ENCODE measurements at regions of chr16 and their contacts with region 1.

Region 1: DNA sequence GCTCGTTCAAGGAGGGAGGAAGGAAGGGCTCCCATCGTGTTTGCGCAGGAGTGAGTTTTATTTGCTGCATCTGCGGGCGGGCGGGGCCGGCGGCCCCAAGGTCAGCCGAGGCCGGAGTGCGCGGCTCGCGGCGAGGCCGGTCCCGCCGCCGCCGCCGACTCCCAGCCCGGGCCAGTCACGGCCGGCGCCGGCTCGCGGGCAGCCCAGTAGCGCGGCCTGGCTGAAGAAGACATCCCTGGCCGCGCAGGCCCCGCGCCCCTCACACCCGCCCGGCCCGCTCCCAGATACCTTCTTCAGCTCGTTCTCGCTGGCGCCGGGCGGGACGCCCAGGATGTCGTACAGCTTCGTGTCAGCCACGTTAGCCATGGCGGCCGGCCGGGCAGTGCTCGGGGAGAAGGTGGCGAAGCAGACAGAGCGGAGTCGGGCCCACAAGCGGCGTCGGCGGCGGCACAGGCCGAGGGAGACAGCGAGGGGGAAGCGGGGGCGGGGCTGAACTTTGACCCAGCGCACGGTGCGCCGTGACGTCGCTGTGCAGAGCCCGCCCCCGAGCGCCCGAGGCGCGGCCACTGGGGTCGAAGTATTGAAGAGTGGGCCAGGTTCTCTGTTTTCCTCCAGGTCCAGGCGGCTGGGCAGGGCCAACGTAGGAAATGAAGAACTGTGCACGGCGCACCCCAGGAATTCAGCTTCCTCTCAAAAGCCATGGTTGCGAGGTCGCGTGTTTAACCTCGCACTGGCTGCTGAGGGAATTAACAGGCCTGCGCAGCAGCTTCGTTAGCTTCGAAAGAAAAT is at the start of gene DNAJA2:
- DNase-seq: peak; percentile 91
- H3K4me3 Mint-ChIP-seq: peak within 1 kb of the TSS; percentile 91
- H3K27ac Mint-ChIP-seq: peak within 1 kb of the TSS; percentile 95
- H3K4me1 Mint-ChIP-seq: peaks cover 55% of the 10 kb centered on the region
- H3K27me3 Mint-ChIP-seq: no peaks in the 10 kb centered on the region
- total RNA-seq, gene DNAJA2: 61.2 to 64.3 TPM

Region 2: GRCh38 chr16:46621006-46621933 is 352.1 kb before region 1 on chr16 and contains the start of gene SHCBP1:
- CTCF ChIA-PET with region 1: no interaction called
- POLR2A ChIA-PET with region 1: interaction called, 11 read pairs
- DNase-seq: peak; percentile 89
- H3K4me3 Mint-ChIP-seq: peak within 1 kb of the TSS; percentile 93
- H3K27ac Mint-ChIP-seq: peak within 1 kb of the TSS; percentile 91
- H3K4me1 Mint-ChIP-seq: peaks cover 35% of the 10 kb centered on the region
- H3K27me3 Mint-ChIP-seq: no peaks in the 10 kb centered on the region
- total RNA-seq, gene SHCBP1: 51.0 to 52.5 TPM

Region 3: GRCh38 chr16:46947900-46948547 is 25.4 kb before region 1 on chr16:
- CTCF ChIA-PET with region 1: interaction called, 9 read pairs
- POLR2A ChIA-PET with region 1: interaction called, 30 read pairs
- DNase-seq: peak; percentile 43
- H3K4me3 Mint-ChIP-seq: no peak overlapping the region
- H3K27ac Mint-ChIP-seq: peak overlapping the region; percentile 59
- H3K4me1 Mint-ChIP-seq: peaks cover 32% of the 10 kb centered on the region
- H3K27me3 Mint-ChIP-seq: no peaks in the 10 kb centered on the region

Region 4: GRCh38 chr16:47016700-47017133 is 43.3 kb after region 1 on chr16:
- CTCF ChIA-PET with region 1: no interaction called
- POLR2A ChIA-PET with region 1: no interaction called
- DNase-seq: peak; percentile 37
- H3K4me3 Mint-ChIP-seq: no peak overlapping the region
- H3K27ac Mint-ChIP-seq: no peak overlapping the region
- H3K4me1 Mint-ChIP-seq: peaks cover 25% of the 10 kb centered on the region
- H3K27me3 Mint-ChIP-seq: peaks cover 6% of the 10 kb centered on the region

Region 5: GRCh38 chr16:47037746-47038458 is 64.5 kb after region 1 on chr16:
- CTCF ChIA-PET with region 1: interaction called, 13 read pairs
- POLR2A ChIA-PET with region 1: interaction called, 10 read pairs
- DNase-seq: peak; percentile 90
- H3K4me3 Mint-ChIP-seq: peak overlapping the region; percentile 65
- H3K27ac Mint-ChIP-seq: no peak overlapping the region
- H3K4me1 Mint-ChIP-seq: peaks cover 8% of the 10 kb centered on the region
- H3K27me3 Mint-ChIP-seq: peaks cover 12% of the 10 kb centered on the region

Region 6: DNA sequence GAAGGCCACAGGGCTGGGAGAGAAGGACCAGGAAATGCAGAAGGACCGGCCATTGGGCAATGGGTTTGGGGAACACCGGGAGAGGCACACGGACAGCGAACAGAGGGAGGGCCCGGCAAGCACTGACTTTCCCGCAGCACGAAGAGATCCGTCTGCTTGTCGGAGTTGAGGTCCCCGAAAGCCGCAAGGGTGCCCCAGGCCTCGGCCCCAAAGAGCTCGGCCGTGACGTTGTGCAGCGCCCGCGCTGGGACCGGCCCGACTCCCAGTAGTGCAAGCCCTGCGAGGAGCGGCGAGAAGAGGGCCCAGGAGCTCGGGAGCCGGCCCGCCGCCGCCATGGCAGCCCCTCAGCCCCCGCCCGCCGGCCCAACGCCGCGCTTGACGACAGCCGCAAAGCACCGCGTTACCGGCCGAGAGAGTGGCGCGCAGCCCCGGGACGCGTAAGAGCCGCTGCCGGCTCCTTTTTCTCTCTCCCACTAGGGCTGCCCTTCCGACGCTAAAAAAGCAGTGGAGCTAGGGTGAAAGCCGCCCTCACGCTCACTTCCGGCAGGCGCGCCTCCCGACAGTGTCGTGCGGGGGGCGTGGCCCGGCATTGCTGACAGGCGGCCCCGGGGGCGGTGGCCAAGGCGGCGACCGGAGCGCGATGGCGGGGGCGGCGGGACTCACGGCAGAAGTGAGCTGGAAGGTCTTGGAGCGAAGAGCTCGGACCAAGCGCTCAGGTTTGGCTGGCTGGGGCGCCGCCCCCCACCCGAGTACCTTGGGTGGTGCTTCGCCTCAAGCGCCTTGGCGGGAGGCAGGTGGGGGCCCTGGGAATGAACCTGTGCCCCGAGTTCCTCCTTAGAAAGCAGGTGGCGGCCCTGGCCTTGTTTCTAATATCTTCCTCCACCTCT is 487.6 kb after region 1 on chr16 and contains the starts of genes ITFG1 and PHKB:
- CTCF ChIA-PET with region 1: no interaction called
- POLR2A ChIA-PET with region 1: interaction called, 20 read pairs
- DNase-seq: peak; percentile 96
- H3K4me3 Mint-ChIP-seq: peak within 1 kb of the TSS; percentile 95
- H3K27ac Mint-ChIP-seq: peak within 1 kb of the TSS; percentile 93
- H3K4me1 Mint-ChIP-seq: peaks cover 52% of the 10 kb centered on the region
- H3K27me3 Mint-ChIP-seq: no peaks in the 10 kb centered on the region
- total RNA-seq, gene ITFG1: 27.9 to 28.8 TPM
- total RNA-seq, gene PHKB: 33.2 to 36.3 TPM

Measured in activated CD4-positive, alpha-beta memory T cell treated with anti-CD3 and anti-CD28 coated beads, Interleukin-2, amount 10 ng/mL, durations not matched to agents 7 days and 5 days (primary cell).